ENCODE measurements at regions of chr12 and their contacts with region 1.

Region 1: DNA sequence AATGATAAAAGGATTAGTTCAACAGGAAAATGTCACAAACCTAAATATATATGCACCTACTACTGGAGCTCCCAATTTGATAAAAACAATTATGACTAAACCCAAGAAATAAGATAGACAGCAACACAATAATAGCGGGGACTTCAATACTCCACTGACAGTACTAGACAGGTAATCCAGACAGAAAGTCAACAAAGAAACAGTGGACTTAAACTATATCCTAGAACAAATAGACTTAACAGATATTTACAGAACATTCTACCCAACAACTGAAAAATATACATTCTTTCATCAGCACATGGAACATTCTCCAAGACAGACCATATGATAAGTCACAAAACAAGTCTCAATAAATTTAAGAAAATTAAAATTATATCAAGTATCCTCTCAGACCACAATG is 28.0 kb upstream of the LGR5 start:
- DNase-seq: no peak

Region 2: DNA sequence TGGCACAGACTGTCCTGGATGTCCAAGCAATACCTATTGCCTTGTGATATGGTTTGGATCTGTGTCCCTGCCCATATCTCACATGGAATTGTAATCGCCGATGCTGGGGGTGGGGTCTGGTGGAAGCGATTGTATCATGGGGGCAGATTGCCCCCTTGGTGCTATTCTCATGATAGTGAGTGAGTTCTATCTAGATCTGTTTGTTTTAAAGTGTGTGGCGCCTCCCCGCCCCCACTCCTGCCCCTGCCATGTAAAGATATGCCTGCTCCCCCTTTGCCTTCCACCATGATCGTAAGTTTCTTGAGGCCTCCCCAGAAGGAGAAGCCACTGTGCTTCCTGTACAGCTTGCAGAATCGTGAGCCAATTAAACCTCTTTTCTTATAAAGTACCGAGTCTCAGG is 1784.1 kb before region 1 on chr12:
- intact Hi-C with region 1: loop called in 1 of 2 experiments (anchors 5 kb)
- DNase-seq: no peak